Astrocyte of the cerebellum (primary cell): ENCODE measurements at regions of chr3 and their contacts with region 1.

Region 1: GRCh38 chr3:193665370-193665989 is 72.5 kb downstream of the OPA1 start:
- DNase-seq: peak; percentile 28
- H3K4me3 ChIP-seq: no peak overlapping the region
- CTCF ChIP-seq: no peak

Region 2: GRCh38 chr3:193605876-193606275 is 59.6 kb before region 1 on chr3:
- in situ Hi-C with region 1: no loop called
- DNase-seq: peak; percentile 50
- H3K4me3 ChIP-seq: no peak overlapping the region
- CTCF ChIP-seq: peak; percentile 92

Region 3: GRCh38 chr3:193620650-193621049 is 44.8 kb before region 1 on chr3:
- in situ Hi-C with region 1: no loop called
- DNase-seq: no peak
- H3K4me3 ChIP-seq: no peak overlapping the region
- CTCF ChIP-seq: no peak

Region 4: DNA sequence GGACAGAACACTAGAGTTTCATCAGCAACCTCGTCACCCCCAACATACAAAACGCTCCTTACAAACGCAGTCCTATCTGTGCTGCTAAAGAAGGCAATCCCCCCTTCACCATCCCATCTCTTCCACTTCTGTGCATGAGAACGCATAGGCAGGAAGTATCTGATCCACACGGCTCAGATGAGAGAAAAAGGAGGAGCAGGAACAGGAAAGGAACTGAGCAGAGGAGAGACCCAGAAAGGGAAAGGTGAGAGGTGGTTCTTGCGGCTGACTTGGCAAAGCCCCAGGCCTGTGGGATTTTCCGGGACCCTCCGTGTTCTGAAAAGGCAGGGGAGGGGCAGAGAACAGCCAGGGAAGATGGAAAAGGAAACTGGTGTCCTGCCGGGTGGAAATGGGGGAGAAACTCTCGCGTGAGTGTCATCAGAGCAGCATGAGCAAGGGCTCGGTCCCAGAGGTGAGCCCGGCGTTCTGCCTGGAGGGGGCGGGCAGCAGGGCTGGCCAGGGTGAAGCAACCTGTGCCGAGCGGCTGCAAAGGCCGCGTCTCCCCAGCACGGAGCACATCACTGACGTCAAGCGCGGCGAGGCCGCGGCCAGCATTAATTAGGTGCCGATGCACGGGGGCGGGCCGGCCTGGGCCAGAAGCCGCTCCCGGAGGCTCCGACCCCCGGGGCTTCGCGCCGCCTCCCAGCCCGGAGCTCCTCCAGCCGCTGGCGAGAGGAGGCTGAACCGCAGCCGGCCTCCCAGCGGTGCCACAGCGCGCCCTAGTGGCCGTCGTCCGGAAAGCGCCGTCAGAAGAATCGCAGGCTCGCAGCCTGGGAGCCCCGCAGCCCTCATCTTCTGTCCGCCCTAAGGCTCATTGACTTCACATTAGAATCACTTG is 649.8 kb after region 1 on chr3:
- in situ Hi-C with region 1: loop called (anchors 25 kb)
- DNase-seq: peak; percentile 71
- H3K4me3 ChIP-seq: peak overlapping the region; percentile 34
- CTCF ChIP-seq: peak; percentile 80